Ascending aorta (tissue), 2 donors: ENCODE measurements at regions of chr15 and their contacts with region 1.

Region 1: DNA sequence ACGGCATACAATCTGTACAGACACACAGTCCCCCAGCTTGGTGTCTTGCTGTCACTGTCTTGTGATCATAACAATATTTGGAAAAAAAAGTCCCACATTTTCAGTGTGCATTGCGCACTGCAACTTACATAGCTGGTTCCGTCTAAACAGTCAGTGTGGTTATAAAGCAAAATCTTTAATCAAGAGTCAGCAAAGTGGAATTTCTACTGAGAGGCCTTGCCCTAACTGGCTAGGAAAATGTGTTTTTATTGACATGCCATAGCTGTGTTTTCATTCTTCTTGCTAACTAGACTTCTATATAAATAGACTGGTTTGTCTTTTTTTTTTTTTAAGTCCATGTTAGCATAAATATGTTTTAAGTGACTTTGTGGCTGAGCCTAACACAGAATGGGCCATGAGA is 174.8 kb downstream of the POLR2M start:
- DNase-seq: no peak
- H3K4me3 ChIP-seq: no peak overlapping the region
- H3K27ac ChIP-seq: no peak overlapping the region
- H3K4me1 ChIP-seq: no peaks in the 10 kb centered on the region
- H3K27me3 ChIP-seq: no peaks in the 10 kb centered on the region
- CTCF ChIP-seq: no peak

Region 2: GRCh38 chr15:57969354-57969753 is 88.0 kb after region 1 on chr15:
- intact Hi-C with region 1: loop called (anchors 10 kb)
- DNase-seq: no peak
- H3K4me3 ChIP-seq: no peak overlapping the region
- H3K27ac ChIP-seq: no peak overlapping the region
- H3K4me1 ChIP-seq: no peaks in the 10 kb centered on the region
- H3K27me3 ChIP-seq: no peaks in the 10 kb centered on the region
- CTCF ChIP-seq: no peak